MCF 10A (cell line): ENCODE measurements at regions of chr1 and their contacts with region 1.

Region 1: GRCh38 chr1:203148125-203148524 is 20.6 kb downstream of the ADORA1 start:
- DNase-seq: peak; percentile 68
- H3K4me3 Mint-ChIP-seq: no peak overlapping the region
- H3K27ac Mint-ChIP-seq: no peak overlapping the region
- H3K4me1 Mint-ChIP-seq: peaks cover 16% of the 10 kb centered on the region
- H3K27me3 Mint-ChIP-seq: no peaks in the 10 kb centered on the region
- CTCF ChIP-seq: peak; percentile 70

Region 2: DNA sequence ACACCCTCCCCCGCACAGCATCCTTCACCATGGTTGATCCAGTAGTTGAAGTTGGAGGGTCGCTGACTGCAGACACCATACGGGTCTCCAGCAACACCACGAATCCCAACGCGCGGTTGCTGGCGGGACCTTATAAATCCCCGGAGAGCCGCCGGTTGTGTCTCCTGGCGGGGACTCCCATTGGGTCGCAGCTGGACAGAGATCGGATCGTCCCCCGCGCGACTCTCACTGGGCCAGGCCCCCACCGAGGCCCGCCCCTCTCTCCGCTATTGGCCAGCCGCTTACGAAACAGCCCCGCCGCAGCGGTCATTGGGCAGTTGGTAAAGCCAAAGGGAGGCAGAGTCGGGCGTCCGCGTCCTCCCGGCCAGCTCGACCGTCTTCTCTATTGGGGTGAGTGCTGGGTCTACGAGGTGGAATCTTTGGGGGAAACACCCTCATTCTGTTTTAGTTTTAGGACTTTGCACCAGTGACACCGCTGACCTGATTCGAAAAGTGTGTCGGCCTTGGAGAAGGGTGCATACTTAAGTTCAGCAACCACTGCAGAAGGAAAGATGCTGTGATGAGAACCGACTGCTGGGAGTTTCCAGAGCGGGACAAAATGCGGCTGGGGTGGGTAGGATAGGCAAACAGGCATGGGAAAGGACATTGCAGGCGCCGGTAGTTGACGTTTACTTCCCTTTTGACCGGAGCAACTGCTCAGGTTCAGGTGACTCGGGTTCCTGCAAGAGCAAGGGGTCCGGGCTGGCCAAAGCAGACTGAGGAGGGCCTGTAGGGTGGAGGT is 286.5 kb before region 1 on chr1:
- CTCF ChIA-PET with region 1: no interaction called
- POLR2A ChIA-PET with region 1: no interaction called
- intact Hi-C with region 1: no loop called
- DNase-seq: peak; percentile 97
- H3K4me3 Mint-ChIP-seq: peak overlapping the region; percentile 87
- H3K27ac Mint-ChIP-seq: no peak overlapping the region
- H3K4me1 Mint-ChIP-seq: peaks cover 6% of the 10 kb centered on the region
- H3K27me3 Mint-ChIP-seq: peaks cover 39% of the 10 kb centered on the region
- CTCF ChIP-seq: no peak

Region 3: DNA sequence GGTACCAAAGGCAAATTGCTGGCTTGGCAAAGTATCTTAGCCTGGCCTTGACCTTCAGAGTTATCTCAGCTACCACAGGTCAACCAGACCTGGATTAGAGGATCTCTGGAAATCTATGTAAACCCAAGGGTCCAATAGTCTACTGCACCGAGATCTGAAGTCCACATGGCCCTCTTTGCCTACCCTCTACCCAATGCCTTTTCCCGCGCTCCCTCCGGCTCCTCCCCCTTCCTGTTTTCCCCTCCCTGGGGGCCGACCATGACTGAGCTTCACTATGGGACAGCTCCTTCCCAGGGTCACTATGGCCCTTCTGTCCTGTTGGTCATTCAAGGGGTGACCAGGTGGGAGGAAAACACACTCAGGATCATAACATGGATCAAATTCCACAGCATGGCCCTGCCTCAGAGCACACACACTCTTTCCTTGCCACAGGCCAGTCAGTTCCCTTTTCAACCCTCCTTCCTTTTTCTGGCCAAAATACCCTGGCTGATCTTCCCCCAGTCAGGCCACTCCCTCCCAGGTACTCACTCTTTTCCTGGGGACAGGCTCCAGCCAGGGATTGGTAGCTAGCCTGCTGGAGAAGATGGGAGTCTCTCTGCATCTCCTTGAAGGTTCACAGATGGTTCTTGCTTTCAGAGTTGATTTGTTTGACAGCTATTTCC is 160.1 kb before region 1 on chr1:
- CTCF ChIA-PET with region 1: no interaction called
- POLR2A ChIA-PET with region 1: no interaction called
- intact Hi-C with region 1: no loop called
- DNase-seq: no peak
- H3K4me3 Mint-ChIP-seq: no peak overlapping the region
- H3K27ac Mint-ChIP-seq: no peak overlapping the region
- H3K4me1 Mint-ChIP-seq: no peaks in the 10 kb centered on the region
- H3K27me3 Mint-ChIP-seq: peaks cover 37% of the 10 kb centered on the region
- CTCF ChIP-seq: no peak

Region 4: GRCh38 chr1:203117611-203118575 is 30.2 kb before region 1 on chr1:
- CTCF ChIA-PET with region 1: interaction called, 38 read pairs
- POLR2A ChIA-PET with region 1: interaction called, 5 read pairs
- intact Hi-C with region 1: no loop called
- DNase-seq: peak; percentile 85
- H3K4me3 Mint-ChIP-seq: no peak overlapping the region
- H3K27ac Mint-ChIP-seq: no peak overlapping the region
- H3K4me1 Mint-ChIP-seq: peaks cover 10% of the 10 kb centered on the region
- H3K27me3 Mint-ChIP-seq: peaks cover 42% of the 10 kb centered on the region
- CTCF ChIP-seq: peak; percentile 99

Region 5: GRCh38 chr1:203127666-203128430 is 20.3 kb before region 1 on chr1 and contains the start of gene ADORA1:
- CTCF ChIA-PET with region 1: interaction called, 44 read pairs
- POLR2A ChIA-PET with region 1: interaction called, 17 read pairs
- intact Hi-C with region 1: loop called (anchors 2 kb)
- DNase-seq: peak; percentile 87
- H3K4me3 Mint-ChIP-seq: peak within 1 kb of the TSS; percentile 72
- H3K27ac Mint-ChIP-seq: peak within 1 kb of the TSS; percentile 21
- H3K4me1 Mint-ChIP-seq: peaks cover 18% of the 10 kb centered on the region
- H3K27me3 Mint-ChIP-seq: peaks cover 13% of the 10 kb centered on the region
- CTCF ChIP-seq: no peak
- total RNA-seq, gene ADORA1: 0.26 and 0.34 TPM in 2 replicates

Region 6: GRCh38 chr1:203133970-203134725 is 14.0 kb before region 1 on chr1:
- CTCF ChIA-PET with region 1: interaction called, 44 read pairs
- POLR2A ChIA-PET with region 1: interaction called, 17 read pairs
- intact Hi-C with region 1: loop called (anchors 2 kb)
- DNase-seq: peak; percentile 89
- H3K4me3 Mint-ChIP-seq: no peak overlapping the region
- H3K27ac Mint-ChIP-seq: no peak overlapping the region
- H3K4me1 Mint-ChIP-seq: peaks cover 17% of the 10 kb centered on the region
- H3K27me3 Mint-ChIP-seq: no peaks in the 10 kb centered on the region
- CTCF ChIP-seq: no peak

Region 7: DNA sequence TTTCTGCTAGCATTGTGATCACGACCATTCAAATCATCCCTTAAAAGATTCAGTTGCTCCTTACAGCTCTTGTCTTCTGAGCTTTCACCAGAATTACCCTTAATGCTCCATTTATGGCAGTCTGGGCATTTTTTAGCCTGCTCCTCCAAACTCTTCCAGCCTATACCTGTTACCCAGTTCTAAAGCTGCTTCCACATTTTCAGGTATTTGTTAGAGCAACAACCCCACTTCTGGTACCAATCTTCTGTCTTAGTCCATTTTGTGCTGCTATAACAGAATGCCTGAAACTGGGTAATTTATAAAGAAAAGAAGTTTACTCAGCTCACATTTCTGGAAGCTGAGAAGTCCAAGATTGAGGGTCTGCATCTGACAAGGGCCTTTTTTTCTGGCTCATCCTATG is 10.3 kb after region 1 on chr1:
- CTCF ChIA-PET with region 1: interaction called, 11 read pairs
- POLR2A ChIA-PET with region 1: interaction called, 3 read pairs
- intact Hi-C with region 1: no loop called
- DNase-seq: no peak
- H3K4me3 Mint-ChIP-seq: no peak overlapping the region
- H3K27ac Mint-ChIP-seq: no peak overlapping the region
- H3K4me1 Mint-ChIP-seq: peaks cover 25% of the 10 kb centered on the region
- H3K27me3 Mint-ChIP-seq: peaks cover 14% of the 10 kb centered on the region
- CTCF ChIP-seq: no peak

Region 8: GRCh38 chr1:203163891-203164635 is 15.9 kb after region 1 on chr1:
- CTCF ChIA-PET with region 1: interaction called, 11 read pairs
- POLR2A ChIA-PET with region 1: interaction called, 3 read pairs
- intact Hi-C with region 1: no loop called
- DNase-seq: no peak
- H3K4me3 Mint-ChIP-seq: no peak overlapping the region
- H3K27ac Mint-ChIP-seq: no peak overlapping the region
- H3K4me1 Mint-ChIP-seq: peaks cover 5% of the 10 kb centered on the region
- H3K27me3 Mint-ChIP-seq: peaks cover 14% of the 10 kb centered on the region
- CTCF ChIP-seq: no peak